Dorsolateral prefrontal cortex (tissue), 120 donors: ENCODE measurements at regions of chr19 and their contacts with region 1.

Region 1: GRCh38 chr19:16495982-16496612 is at the starts of genes C19orf44 and CALR3:
- DNase-seq: peak; percentile 99
- H3K4me3 ChIP-seq: peak within 1 kb of the TSS; percentile 58 to 92 (median 74)
- H3K27ac ChIP-seq: peak within 1 kb of the TSS in 49 of 59 donors; percentile 4 to 89 (median 74)
- H3K27me3 ChIP-seq: no peaks in the 10 kb centered on the region
- CTCF ChIP-seq: peak in 46 of 56 donors; percentile 15 to 61 (median 36)
- total RNA-seq, gene C19orf44: 3.5 to 13.9 (median 7.9) TPM
- total RNA-seq, gene CALR3: 0.51 to 0.90 TPM in 2 of 120 experiments, not detected in the others

Region 2: GRCh38 chr19:16470911-16471811 is 24.9 kb before region 1 on chr19:
- intact Hi-C with region 1: loop called in 1 of 2 experiments (anchors 1 kb)
- DNase-seq: peak in 4 of 10 donors; percentile 16 to 50 (median 20)
- H3K4me3 ChIP-seq: peak overlapping the region; percentile 51 to 98 (median 91)
- H3K27ac ChIP-seq: peak overlapping the region in 53 of 59 donors; percentile 8 to 93 (median 79)
- H3K27me3 ChIP-seq: no peaks in the 10 kb centered on the region
- CTCF ChIP-seq: no peak

Region 3: GRCh38 chr19:16482736-16483135 is 13.4 kb before region 1 on chr19:
- intact Hi-C with region 1: no loop called
- DNase-seq: no peak
- H3K4me3 ChIP-seq: no peak overlapping the region
- H3K27ac ChIP-seq: no peak overlapping the region
- H3K27me3 ChIP-seq: no peaks in the 10 kb centered on the region
- CTCF ChIP-seq: no peak

Region 4: DNA sequence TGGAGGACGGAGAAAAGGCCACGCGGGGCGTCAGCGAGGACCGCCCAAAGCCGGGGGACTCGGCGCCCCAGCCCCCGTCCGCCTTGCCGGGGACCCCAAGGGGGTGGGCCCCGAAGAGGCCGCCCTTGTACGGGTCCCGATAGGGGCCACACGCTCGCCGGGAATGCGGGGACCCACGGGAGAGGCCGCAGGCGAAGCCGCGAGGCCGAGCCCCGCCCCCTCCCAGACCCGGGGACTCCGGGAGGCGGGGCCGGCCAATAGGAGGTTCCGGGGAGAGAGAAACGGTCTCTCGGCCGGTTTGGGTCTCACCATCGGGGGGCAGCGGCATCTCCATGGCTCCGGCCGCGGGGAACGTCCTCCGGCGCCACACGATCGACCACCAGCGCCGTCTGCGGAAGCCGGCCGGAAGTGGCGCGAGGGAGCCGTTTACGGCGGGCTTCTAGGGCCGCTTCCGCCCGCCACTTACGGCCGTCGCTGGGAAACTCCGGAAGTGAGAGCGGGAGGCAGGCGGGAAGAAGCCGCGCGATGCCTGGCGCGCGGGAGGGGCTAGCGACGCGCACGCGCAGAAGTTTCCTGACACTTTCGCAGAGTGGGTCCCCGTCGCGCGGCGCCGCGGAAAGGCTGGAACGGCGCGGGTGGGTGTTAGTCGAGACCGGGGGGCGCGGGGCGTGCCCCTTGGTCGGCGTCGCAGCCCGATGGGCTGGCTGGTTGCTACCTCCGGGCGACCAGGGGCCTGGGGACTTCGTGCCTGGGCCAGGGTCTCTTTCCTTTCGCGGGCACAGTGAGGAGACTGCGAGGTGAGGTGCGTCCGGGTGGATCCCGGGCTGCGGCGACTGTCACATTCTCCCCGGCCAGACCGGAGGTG is 46.2 kb after region 1 on chr19 and contains the start of gene CHERP:
- intact Hi-C with region 1: loop called in 1 of 2 experiments (anchors 1 kb)
- DNase-seq: peak; percentile 86 to 95 (median 92)
- H3K4me3 ChIP-seq: peak within 1 kb of the TSS; percentile 66 to 100 (median 94)
- H3K27ac ChIP-seq: peak within 1 kb of the TSS; percentile 20 to 97 (median 87)
- H3K27me3 ChIP-seq: no peaks in the 10 kb centered on the region
- CTCF ChIP-seq: peak in 37 of 56 donors; percentile 7 to 66 (median 32)
- total RNA-seq, gene CHERP: 35.1 to 67.0 (median 47.9) TPM

Region 5: DNA sequence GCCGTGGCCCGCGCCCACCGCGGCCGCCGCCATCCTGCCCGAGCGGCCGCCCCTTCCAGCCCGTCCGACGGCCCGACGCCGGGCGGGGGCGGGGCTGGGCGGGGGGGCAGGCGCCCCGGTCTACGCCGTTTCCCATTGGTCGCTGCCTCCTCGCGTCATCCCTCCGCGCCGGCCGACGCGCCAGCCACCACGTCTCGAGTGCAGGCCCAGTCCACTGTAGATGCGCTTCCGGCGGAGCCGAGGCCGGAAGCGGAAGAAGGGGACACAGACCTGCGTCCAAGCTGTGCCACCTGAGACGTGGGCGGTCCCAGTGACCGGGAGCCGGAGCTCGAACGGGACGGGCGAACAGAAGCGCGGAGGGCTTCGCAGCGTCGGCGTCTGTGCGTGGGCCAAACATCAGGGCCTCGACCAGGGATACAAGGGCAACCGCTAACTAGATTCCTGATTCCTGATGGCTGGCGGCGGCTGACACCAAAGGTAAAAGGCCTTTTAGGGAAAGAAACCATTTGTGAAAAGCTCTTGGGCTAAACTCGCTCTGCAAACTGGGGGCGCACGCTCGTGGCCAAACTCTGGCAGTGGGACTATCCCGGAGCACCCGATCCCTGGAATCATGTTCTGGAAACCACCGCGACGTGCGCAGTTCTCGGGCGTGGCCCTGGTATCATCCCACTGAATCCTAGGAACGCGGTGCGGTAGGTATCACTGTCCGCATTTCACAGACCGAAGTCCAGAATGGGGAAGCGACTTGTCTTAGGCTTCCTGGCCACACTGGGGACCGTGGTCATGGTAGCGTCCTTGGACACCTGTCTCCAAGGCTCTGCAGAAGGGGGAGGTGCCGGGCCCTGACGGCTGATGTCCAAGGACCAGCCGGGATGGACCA is 76.5 kb after region 1 on chr19 and contains the start of gene SLC35E1:
- intact Hi-C with region 1: loop called in 1 of 2 experiments (anchors 2 kb)
- DNase-seq: peak; percentile 89 to 96 (median 94)
- H3K4me3 ChIP-seq: peak within 1 kb of the TSS; percentile 68 to 99 (median 90)
- H3K27ac ChIP-seq: peak within 1 kb of the TSS in 58 of 59 donors; percentile 1 to 92 (median 77)
- H3K27me3 ChIP-seq: no peaks in the 10 kb centered on the region
- CTCF ChIP-seq: peak in 17 of 56 donors; percentile 6 to 37 (median 23)
- total RNA-seq, gene SLC35E1: 27.5 to 64.1 (median 42.2) TPM